Aorta (tissue), 5 donors: ENCODE measurements at regions of chr6 and their contacts with region 1.

Region 1: GRCh38 chr6:1624851-1625781 is 15.4 kb downstream of the FOXC1 start:
- DNase-seq: peak in 1 of 2 donors; percentile 77
- ATAC-seq: peak; percentile 67
- H3K4me3 ChIP-seq: peak overlapping the region; percentile 68 to 90
- H3K27ac ChIP-seq: peak overlapping the region; percentile 98 to 99
- H3K4me1 ChIP-seq: peaks cover 0 to 2% of the 10 kb centered on the region in 2 donors
- H3K27me3 ChIP-seq: no peaks in the 10 kb centered on the region

Region 2: DNA sequence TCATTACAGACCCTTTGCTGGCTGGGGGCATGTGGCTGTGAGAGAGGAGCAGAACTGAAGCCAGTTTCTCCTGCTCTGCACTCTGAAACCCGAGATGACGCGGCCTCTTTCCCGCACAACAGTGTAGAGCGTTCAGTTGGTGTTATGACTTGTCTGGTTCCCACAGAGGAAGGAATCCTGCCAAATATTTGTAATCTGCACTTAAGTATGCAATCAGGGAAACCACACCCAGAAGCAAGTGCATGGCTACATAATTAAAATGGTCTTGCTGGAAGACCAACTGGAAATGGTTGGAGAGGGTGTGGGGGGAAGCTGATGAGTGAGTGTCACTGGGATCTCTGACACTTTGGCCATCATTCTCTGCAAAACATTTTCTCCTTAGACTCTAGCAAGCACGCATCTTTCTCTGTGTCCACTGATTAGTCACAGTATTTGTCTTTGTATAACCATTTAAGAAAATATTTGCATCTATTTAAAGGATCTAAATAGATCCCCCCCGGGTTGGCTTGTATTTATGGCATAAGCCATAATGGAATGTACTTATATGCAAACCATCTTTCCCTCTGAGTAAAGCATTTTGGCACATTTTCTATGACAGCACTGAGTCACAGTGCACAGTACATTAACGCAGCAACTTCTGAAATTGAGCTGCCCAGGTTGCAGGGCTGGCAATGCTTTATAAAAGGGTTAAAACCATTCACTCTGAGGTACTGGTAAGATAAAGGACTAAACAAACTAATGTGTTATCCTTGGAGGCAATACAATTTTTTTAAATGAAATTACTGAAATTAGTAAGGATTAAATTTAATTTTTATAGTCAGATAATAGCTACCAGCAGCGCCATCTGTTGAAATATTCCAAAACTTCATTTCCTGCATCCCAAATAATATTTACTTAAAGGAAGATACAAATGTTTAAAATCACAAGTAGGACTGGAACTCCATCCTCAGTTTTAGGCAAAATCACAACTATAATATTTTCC is 61.3 kb after region 1 on chr6:
- intact Hi-C with region 1: loop called (anchors 5 kb)
- DNase-seq: peak; percentile 74 to 84
- ATAC-seq: peak; percentile 78
- H3K4me3 ChIP-seq: no peak overlapping the region
- H3K27ac ChIP-seq: peak overlapping the region in 1 of 2 donors; percentile 93
- H3K4me1 ChIP-seq: peaks cover 0 to 6% of the 10 kb centered on the region in 2 donors
- H3K27me3 ChIP-seq: no peaks in the 10 kb centered on the region

Region 3: GRCh38 chr6:1802491-1803395 is 177.6 kb after region 1 on chr6:
- intact Hi-C with region 1: loop called in 1 of 2 experiments (anchors 10 kb)
- DNase-seq: no peak
- ATAC-seq: no peak
- H3K4me3 ChIP-seq: peak overlapping the region in 1 of 2 donors; percentile 39
- H3K27ac ChIP-seq: peak overlapping the region; percentile 93 to 94
- H3K4me1 ChIP-seq: peaks cover 4 to 6% of the 10 kb centered on the region in 2 donors
- H3K27me3 ChIP-seq: no peaks in the 10 kb centered on the region

Region 4: GRCh38 chr6:1901556-1901955 is 276.4 kb after region 1 on chr6:
- intact Hi-C with region 1: loop called (anchors 5 kb)
- DNase-seq: no peak
- ATAC-seq: no peak
- H3K4me3 ChIP-seq: no peak overlapping the region
- H3K27ac ChIP-seq: peak overlapping the region; percentile 16 to 53
- H3K4me1 ChIP-seq: peaks cover 6 to 9% of the 10 kb centered on the region in 2 donors
- H3K27me3 ChIP-seq: no peaks in the 10 kb centered on the region

Region 5: GRCh38 chr6:2196079-2196679 is 571.1 kb after region 1 on chr6:
- intact Hi-C with region 1: loop called in 1 of 2 experiments (anchors 5 kb)
- DNase-seq: no peak
- ATAC-seq: peak; percentile 80
- H3K4me3 ChIP-seq: no peak overlapping the region
- H3K27ac ChIP-seq: no peak overlapping the region
- H3K4me1 ChIP-seq: peaks cover 0 to 2% of the 10 kb centered on the region in 2 donors
- H3K27me3 ChIP-seq: no peaks in the 10 kb centered on the region